Heart right ventricle (tissue), 16 donors: ENCODE measurements at regions of chr1 and their contacts with region 1.

Region 1: GRCh38 chr1:11629184-11630016 is 24.8 kb downstream of the FBXO2 start:
- DNase-seq: no peak
- ATAC-seq: no peak
- H3K4me3 ChIP-seq: no peak overlapping the region
- H3K27ac ChIP-seq: no peak overlapping the region
- H3K4me1 ChIP-seq: no peaks in the 10 kb centered on the region
- H3K27me3 ChIP-seq: peaks cover 0 to 74% (median 49%) of the 10 kb centered on the region in 7 donors
- CTCF ChIP-seq: no peak

Region 2: DNA sequence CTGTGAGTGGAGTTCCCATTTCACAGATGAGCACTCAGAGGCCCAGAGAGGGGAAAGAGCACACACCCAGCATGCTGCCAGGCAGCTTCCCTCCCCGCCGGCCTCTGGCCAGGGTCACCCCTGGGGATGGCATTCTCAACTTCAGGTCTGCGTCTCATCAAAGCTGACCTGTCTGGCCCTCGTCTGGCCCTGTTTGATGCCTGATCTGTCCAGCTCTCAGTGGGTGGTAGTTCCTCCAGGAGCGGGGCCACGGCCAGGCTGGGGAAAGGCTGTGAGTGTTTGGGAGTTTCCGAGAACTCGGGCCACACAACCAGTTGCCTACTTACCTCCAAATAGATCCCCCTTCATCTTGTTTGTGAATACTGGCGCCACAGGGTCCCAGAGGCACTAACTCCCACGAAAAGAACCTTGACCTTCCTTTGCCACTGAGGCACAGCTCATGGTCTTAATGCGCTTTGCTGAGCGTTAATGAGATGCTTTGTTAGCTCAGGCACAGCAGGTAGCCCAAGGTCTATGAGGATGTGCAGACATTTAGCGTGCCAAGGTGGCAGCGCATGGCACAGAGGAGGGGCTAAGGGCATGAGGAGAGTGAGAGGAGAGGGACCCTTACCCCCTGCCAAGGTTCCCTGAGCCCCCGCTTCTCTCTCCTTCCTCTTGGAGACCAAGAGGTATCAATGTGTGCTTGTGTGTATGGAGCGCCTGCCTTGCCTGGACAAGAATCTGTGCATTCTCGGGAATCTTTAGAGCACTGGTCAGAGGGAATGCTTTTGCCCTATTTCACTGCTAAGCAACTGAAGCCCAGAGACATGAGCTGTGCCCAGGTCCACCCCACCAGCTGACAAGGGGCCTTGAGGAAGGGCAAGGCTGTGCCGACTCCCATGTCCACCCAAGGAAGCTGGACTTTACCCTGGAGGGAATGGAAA is 89.3 kb before region 1 on chr1:
- intact Hi-C with region 1: loop called in 1 of 10 experiments (anchors 10 kb)
- DNase-seq: no peak
- ATAC-seq: no peak
- H3K4me3 ChIP-seq: no peak overlapping the region
- H3K27ac ChIP-seq: no peak overlapping the region
- H3K4me1 ChIP-seq: no peaks in the 10 kb centered on the region
- H3K27me3 ChIP-seq: peaks cover 0 to 72% (median 29%) of the 10 kb centered on the region in 7 donors
- CTCF ChIP-seq: no peak